Endothelial cell of umbilical vein (primary cell): ENCODE measurements at regions of chr20 and their contacts with region 1.

Region 1: GRCh38 chr20:50509935-50510705 is at the start of gene PTPN1:
- DNase-seq: peak; percentile 99
- H3K4me3 ChIP-seq: peak within 1 kb of the TSS; percentile 35 to 97 (median 88)
- H3K27ac ChIP-seq: peak within 1 kb of the TSS; percentile 97
- H3K4me1 ChIP-seq: peaks cover 31% of the 10 kb centered on the region
- H3K27me3 ChIP-seq: no peaks in the 10 kb centered on the region
- CTCF ChIP-seq: peak in 1 of 2 donors; percentile 2
- POLR2A ChIP-seq: peak; percentile 99
- total RNA-seq, gene PTPN1: 57.7 and 64.3 TPM in 2 replicates

Region 2: DNA sequence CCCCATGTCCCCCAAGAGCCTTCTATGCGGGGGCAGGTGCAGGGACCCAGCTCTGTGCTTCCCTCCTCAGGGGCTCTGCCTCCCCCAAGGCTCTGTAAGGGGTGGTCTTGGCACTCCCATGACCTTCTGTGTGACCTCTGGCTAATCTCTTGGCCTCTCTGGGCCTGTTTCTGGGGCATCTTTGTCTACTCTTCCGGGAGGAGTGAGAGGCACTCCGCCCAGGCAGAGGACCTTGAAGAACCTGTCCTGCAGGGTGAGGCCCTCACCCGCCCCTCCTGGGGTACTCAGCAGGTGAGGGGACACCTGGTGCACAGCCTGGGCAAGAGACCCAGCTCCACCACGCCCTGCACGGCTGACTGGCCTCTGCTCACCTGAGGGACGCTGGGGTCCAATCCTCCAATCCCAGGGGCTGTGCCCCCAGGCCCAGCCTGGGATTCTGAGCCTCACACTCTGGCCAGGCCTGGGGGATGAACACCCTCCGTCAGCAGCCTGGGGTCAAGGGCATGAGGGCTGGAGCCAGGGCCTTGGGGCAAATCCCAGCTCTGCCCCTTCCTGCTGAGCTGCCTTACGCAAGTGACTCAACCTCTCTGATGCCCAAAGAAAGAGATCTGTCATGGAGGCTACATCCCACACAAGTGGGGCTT is 150.0 kb before region 1 on chr20:
- CTCF ChIA-PET with region 1: no interaction called
- POLR2A ChIA-PET with region 1: no interaction called
- dilution Hi-C with region 1: no loop called
- intact Hi-C with region 1: no loop called
- DNase-seq: no peak
- H3K4me3 ChIP-seq: no peak overlapping the region
- H3K27ac ChIP-seq: no peak overlapping the region
- H3K4me1 ChIP-seq: no peaks in the 10 kb centered on the region
- H3K27me3 ChIP-seq: peaks cover 17 to 22% of the 10 kb centered on the region in 2 experiments
- CTCF ChIP-seq: no peak
- POLR2A ChIP-seq: no peak

Region 3: DNA sequence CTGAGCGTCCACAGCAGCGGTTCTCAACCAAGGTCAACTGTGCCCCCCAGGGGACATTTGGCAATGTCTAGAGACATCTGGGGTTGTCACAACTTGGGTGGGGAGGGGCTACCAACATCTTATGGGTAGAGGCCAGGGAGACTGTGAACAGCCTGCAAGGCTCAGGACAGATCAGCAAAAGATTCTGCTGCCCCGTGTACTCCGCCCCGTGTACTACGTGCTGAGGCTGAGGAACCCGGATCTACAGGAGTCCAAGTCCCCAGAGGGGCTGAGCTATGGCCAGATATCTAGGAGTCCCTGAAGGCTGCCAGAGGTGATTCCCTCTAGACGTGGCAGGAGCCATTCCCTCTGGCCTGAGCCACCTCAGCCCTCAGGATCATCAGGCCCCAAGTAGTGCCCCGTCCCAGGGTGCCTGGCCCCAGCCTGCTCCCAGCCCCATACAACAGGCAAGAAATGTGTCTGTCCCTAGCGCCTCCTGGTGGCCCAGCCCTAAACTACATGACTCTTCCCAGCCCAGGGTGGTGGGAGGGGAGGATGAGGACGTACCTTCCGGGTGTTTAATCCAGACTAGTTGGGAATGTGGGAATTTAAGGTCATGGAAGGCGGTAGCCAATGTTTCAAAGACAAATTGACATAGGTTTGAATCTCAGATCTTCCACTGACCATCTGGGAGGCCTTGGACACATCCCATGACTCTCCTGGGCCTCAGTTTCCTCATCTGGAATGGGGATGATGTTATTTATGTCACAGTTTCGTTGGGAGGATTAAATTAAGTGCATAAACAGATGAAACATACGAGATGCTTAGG is 49.5 kb before region 1 on chr20:
- CTCF ChIA-PET with region 1: interaction called, 11 read pairs
- POLR2A ChIA-PET with region 1: no interaction called
- dilution Hi-C with region 1: no loop called
- intact Hi-C with region 1: no loop called
- DNase-seq: peak; percentile 84
- H3K4me3 ChIP-seq: no peak overlapping the region
- H3K27ac ChIP-seq: no peak overlapping the region
- H3K4me1 ChIP-seq: no peaks in the 10 kb centered on the region
- H3K27me3 ChIP-seq: no peaks in the 10 kb centered on the region
- CTCF ChIP-seq: peak; percentile 88 to 90
- POLR2A ChIP-seq: no peak

Region 4: DNA sequence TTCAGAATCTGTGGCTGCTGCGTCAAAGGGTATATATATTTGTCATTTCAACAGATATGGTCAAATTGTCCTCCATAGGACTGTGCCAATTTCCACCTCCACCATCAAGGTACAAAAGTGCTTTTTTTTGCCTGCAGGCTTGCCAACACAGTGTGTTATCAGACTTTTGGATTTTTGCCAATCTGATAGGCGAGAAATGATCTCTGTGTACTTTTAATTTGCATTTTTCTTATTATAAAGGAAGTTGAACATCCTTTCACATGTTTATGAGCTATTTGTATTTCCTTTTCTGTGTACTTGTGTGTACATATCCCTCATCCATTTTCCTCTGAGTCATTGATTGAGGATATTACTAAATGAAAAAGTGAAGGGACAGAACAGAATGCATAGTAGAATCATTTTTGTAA is 38.9 kb before region 1 on chr20:
- CTCF ChIA-PET with region 1: interaction called, 17 read pairs
- POLR2A ChIA-PET with region 1: no interaction called
- dilution Hi-C with region 1: no loop called
- intact Hi-C with region 1: loop called (anchors 1 kb)
- DNase-seq: peak; percentile 78
- H3K4me3 ChIP-seq: no peak overlapping the region
- H3K27ac ChIP-seq: peak overlapping the region; percentile 30
- H3K4me1 ChIP-seq: peaks cover 34% of the 10 kb centered on the region
- H3K27me3 ChIP-seq: no peaks in the 10 kb centered on the region
- CTCF ChIP-seq: no peak
- POLR2A ChIP-seq: no peak

Region 5: GRCh38 chr20:50484276-50484976 is 25.7 kb before region 1 on chr20:
- CTCF ChIA-PET with region 1: interaction called, 10 read pairs
- POLR2A ChIA-PET with region 1: interaction called, 4 read pairs
- dilution Hi-C with region 1: no loop called
- intact Hi-C with region 1: loop called (anchors 2 kb)
- DNase-seq: no peak
- H3K4me3 ChIP-seq: peak overlapping the region in 1 of 3 experiments; percentile 59
- H3K27ac ChIP-seq: peak overlapping the region; percentile 72
- H3K4me1 ChIP-seq: peaks cover 12% of the 10 kb centered on the region
- H3K27me3 ChIP-seq: no peaks in the 10 kb centered on the region
- CTCF ChIP-seq: no peak
- POLR2A ChIP-seq: no peak

Region 6: GRCh38 chr20:50491926-50492634 is 18.0 kb before region 1 on chr20:
- CTCF ChIA-PET with region 1: interaction called, 4 read pairs
- POLR2A ChIA-PET with region 1: interaction called, 4 read pairs
- dilution Hi-C with region 1: no loop called
- intact Hi-C with region 1: loop called (anchors 2 kb)
- DNase-seq: no peak
- H3K4me3 ChIP-seq: no peak overlapping the region
- H3K27ac ChIP-seq: no peak overlapping the region
- H3K4me1 ChIP-seq: peaks cover 19% of the 10 kb centered on the region
- H3K27me3 ChIP-seq: no peaks in the 10 kb centered on the region
- CTCF ChIP-seq: no peak
- POLR2A ChIP-seq: no peak

Region 7: DNA sequence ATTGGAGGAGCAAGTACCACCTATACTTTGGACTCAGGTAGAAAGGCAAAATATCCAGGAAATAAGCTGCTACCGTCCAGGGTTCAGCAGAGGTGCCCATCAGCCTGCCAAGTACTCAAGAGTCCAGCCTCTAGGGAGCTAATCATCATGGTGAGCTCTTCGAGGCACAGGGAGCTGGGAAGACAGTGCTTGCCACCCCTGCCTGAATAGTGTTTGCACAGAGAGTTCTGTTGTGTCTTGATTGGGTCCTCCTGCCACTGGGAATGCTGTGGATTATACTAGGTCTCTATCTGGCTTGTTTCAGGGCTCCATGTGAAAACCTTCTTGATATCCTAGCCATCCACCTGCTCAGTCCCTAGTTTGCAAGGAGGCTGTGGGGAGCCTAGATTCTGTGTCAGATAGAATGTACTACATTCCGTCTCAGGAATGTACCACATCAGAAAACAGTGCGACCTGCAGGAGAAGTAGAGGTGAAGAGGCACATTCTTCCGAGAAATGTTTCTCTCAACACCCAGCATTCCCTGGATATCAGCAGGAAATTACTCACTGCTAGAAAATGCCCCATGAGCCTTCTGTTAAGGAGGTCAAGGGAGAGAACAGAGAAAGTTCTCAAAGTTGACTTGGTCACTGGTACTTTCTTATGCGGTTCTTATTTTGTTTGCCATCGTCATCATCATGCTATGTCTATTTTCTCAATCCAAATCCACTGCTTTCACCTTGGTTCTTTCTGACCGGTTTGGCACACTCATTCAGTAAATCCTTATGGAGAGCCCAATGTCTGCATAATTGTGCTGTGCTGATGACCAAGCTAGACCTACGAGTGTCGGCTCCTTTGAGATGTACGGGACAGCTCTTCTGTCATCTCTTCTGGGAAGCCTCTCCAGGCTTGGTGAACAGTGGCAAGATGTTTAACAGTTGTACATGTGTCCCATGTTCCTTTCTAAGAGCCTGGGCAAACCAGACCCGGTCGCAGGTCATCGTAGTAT is 30.8 kb after region 1 on chr20:
- CTCF ChIA-PET with region 1: interaction called, 21 read pairs
- POLR2A ChIA-PET with region 1: interaction called, 5 read pairs
- dilution Hi-C with region 1: no loop called
- intact Hi-C with region 1: loop called (anchors 1 kb)
- DNase-seq: peak; percentile 94
- H3K4me3 ChIP-seq: peak overlapping the region in 1 of 3 experiments; percentile 34
- H3K27ac ChIP-seq: peak overlapping the region; percentile 98
- H3K4me1 ChIP-seq: peaks cover 51% of the 10 kb centered on the region
- H3K27me3 ChIP-seq: no peaks in the 10 kb centered on the region
- CTCF ChIP-seq: peak; percentile 10 to 14
- POLR2A ChIP-seq: peak; percentile 71

Region 8: DNA sequence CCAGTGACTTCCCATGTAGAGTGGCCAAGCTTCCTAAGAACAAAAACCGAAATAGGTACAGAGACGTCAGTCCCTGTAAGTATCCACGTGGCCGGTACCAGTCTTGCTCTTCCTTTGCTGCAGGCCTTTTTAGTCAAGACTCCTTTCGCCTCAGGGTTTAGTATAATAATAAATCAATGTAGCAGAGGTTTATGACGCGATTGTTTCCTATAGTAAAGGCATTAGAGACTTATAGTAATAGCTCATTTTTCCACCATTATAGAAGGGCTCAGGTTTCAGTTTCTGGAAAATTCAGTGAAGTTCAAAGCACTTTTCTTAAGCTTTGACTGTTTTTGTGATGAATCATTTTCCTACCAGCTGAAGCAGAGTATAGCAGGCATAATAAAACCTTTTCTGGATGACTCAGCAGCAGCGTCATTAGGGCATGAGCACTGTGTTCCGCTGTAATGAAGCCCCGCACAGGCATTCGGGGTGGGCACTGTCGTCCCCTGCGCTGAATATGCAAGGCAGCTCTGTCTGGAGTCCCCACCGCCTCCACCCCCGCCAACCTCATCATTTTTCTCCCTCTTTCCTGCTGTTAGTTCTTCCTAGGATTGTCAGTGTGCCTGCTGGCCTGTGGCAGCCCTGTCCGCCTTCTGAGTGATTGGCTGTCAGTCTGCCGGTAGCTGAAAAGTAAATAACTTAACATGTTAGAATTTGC is 51.4 kb after region 1 on chr20:
- CTCF ChIA-PET with region 1: interaction called, 11 read pairs
- POLR2A ChIA-PET with region 1: interaction called, 16 read pairs
- dilution Hi-C with region 1: no loop called
- intact Hi-C with region 1: loop called (anchors 1 kb)
- DNase-seq: peak; percentile 97
- H3K4me3 ChIP-seq: peak overlapping the region in 1 of 3 experiments; percentile 3
- H3K27ac ChIP-seq: peak overlapping the region; percentile 84
- H3K4me1 ChIP-seq: peaks cover 47% of the 10 kb centered on the region
- H3K27me3 ChIP-seq: no peaks in the 10 kb centered on the region
- CTCF ChIP-seq: no peak
- POLR2A ChIP-seq: no peak

Region 9: DNA sequence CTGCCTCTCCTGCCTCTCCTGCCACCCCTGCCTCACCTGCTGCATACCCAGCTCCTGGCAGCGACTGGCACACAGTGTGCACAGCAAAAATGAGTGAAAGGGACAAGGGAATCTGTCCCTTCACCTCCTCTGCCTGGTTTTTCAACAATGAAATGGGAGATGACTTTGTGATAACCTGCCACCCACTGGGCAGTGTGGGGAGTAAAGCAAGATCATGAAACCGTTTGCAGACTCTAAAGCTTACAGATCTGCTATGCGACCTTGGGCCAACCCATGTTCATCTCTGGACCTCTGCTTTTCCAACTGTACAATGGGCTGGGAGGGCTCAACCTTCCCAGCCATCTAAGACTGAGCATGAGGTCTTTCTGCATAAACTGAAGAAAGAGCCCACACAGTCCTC is 100.1 kb after region 1 on chr20:
- CTCF ChIA-PET with region 1: no interaction called
- POLR2A ChIA-PET with region 1: no interaction called
- dilution Hi-C with region 1: no loop called
- intact Hi-C with region 1: no loop called
- DNase-seq: no peak
- H3K4me3 ChIP-seq: no peak overlapping the region
- H3K27ac ChIP-seq: no peak overlapping the region
- H3K4me1 ChIP-seq: no peaks in the 10 kb centered on the region
- H3K27me3 ChIP-seq: no peaks in the 10 kb centered on the region
- CTCF ChIP-seq: no peak
- POLR2A ChIP-seq: no peak

Region 10: GRCh38 chr20:50799890-50800655 is 290.0 kb after region 1 on chr20:
- CTCF ChIA-PET with region 1: no interaction called
- POLR2A ChIA-PET with region 1: no interaction called
- dilution Hi-C with region 1: no loop called
- intact Hi-C with region 1: no loop called
- DNase-seq: no peak
- H3K4me3 ChIP-seq: no peak overlapping the region
- H3K27ac ChIP-seq: no peak overlapping the region
- H3K4me1 ChIP-seq: no peaks in the 10 kb centered on the region
- H3K27me3 ChIP-seq: peaks cover 0 to 6% of the 10 kb centered on the region in 2 experiments
- CTCF ChIP-seq: no peak
- POLR2A ChIP-seq: no peak